Lower leg skin (tissue), 4 donors: ENCODE measurements at regions of chr1 and their contacts with region 1.

Region 1: GRCh38 chr1:46193984-46194570 is 4.2 kb downstream of the POMGNT1 start:
- DNase-seq: no peak
- H3K4me3 ChIP-seq: no peak overlapping the region
- CTCF ChIP-seq: no peak
- POLR2A ChIP-seq: no peak

Region 2: DNA sequence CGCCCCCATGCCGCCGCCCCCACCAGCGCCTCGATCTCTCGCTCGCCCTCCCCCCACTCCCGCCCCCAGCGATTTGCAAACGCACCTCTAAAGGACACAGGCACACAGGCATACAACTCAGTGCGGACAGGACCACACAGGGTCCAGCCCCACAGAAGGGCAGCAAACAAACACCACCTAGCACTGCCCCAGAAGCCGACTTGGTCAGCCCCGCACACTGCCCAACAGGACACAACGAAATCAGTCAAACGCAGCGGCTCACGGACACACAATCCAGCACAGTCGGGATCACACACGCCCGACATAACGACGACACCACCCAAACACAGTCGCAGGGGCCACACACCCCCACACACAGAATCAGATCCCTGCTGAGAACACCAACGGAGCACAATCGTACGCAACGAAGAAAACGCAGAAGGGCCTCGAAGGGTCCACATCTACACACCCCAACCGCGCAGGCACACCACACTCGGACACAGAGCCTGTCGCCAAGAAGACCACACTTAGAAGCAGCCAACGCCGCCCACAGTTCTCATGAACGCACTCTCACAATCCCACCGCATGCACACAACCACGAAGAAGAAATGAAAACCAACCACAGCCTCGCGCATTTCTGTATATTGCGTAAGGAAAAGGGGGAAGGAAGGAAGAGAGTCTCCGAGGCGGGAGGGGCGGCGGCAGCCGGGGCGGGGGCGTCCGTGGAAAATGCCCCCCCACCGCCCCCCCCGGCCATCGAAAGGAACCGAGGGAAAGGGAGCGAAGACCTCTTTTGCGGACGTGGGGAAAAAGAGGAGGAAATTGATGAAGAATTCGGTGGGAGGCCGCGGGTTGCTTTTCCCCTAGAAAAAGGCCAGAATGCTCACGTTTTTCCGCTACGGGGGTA is 1037.5 kb after region 1 on chr1:
- intact Hi-C with region 1: loop called (anchors 5 kb)
- DNase-seq: peak in 1 of 2 donors; percentile 85
- H3K4me3 ChIP-seq: peak overlapping the region; percentile 0
- CTCF ChIP-seq: no peak
- POLR2A ChIP-seq: no peak